Aorta (tissue), 5 donors: ENCODE measurements at regions of chr18 and their contacts with region 1.

Region 1: GRCh38 chr18:8389391-8390340 is 219.6 kb upstream of the RAB12 start:
- DNase-seq: peak; percentile 70 to 84
- ATAC-seq: peak; percentile 65
- H3K4me3 ChIP-seq: no peak overlapping the region
- H3K27ac ChIP-seq: no peak overlapping the region
- H3K4me1 ChIP-seq: no peaks in the 10 kb centered on the region
- H3K27me3 ChIP-seq: no peaks in the 10 kb centered on the region

Region 2: DNA sequence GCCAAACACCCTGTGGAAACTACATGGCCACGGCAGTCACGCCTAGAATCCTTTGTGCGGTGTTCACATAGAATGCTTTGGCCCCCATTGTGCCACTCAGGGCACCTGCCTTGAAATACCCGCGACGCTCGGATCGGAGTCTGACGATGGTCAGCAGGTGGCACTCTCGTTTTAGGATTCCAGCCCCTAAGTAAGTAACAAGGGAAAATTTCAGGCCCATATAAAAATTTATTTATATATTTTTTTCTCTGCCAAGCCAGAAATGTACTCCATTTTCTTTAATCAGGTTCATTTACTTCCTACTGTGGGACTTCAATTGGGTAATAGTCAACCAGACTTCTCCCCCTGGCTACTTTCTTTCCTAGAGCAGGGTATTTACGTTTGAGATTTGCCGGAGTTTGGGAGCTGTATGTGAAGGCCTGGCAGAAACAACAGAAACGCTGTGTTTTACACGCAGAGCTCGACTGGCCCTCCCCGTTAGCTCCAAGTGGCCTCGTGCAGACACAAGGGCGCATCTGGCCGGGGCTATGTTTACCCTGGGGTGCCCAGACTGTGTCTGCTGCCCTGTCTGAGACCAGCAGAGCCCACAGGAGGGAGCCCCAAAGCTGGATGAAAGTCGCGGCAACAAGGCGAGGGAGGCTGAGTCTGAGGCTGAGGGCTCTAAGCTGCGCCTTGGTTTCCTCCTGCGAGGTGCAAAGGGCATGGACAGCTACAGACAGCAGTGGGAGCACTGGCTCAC is 1117.2 kb before region 1 on chr18:
- intact Hi-C with region 1: loop called in 1 of 2 experiments (anchors 5 kb)
- DNase-seq: peak; percentile 78 to 86
- ATAC-seq: peak; percentile 86
- H3K4me3 ChIP-seq: no peak overlapping the region
- H3K27ac ChIP-seq: no peak overlapping the region
- H3K4me1 ChIP-seq: no peaks in the 10 kb centered on the region
- H3K27me3 ChIP-seq: no peaks in the 10 kb centered on the region

Region 3: DNA sequence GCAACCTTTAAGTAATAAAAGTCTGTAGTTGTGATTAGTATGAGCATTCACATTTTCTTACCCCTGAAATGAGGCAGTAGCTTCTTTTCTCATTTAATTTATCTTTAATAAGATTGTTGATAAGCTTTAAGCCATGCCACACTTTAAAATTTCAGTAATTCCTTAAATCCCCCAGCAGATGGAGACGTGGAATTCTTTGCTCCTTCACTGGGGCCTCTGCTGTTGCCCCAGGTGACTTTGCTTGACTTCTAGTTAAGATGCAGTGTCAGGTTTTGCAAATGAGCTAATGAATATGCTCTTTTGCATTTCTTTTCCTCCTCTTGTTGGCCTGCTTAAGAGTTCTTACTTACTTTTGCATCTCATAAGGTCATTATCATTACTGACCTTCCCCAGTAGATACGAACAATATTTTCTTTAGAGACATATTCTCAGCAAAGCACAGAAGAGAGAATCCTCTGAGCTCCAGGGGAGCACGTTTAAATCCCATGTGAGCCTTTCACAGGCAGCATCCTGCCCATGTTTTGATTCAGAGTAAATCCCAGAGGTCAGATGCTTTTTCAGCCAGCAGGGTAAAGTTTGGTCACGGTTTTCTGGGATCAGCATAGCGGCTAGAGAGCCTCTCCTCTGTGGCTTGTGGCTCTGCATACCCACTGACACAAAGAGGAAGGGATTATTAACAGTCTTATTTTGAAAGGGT is 599.7 kb before region 1 on chr18:
- intact Hi-C with region 1: loop called in 1 of 2 experiments (anchors 5 kb)
- DNase-seq: no peak
- ATAC-seq: no peak
- H3K4me3 ChIP-seq: no peak overlapping the region
- H3K27ac ChIP-seq: no peak overlapping the region
- H3K4me1 ChIP-seq: no peaks in the 10 kb centered on the region
- H3K27me3 ChIP-seq: no peaks in the 10 kb centered on the region

Region 4: GRCh38 chr18:7946734-7947377 is 442.8 kb before region 1 on chr18:
- intact Hi-C with region 1: loop called in 1 of 2 experiments (anchors 5 kb)
- DNase-seq: no peak
- ATAC-seq: no peak
- H3K4me3 ChIP-seq: no peak overlapping the region
- H3K27ac ChIP-seq: no peak overlapping the region
- H3K4me1 ChIP-seq: no peaks in the 10 kb centered on the region
- H3K27me3 ChIP-seq: no peaks in the 10 kb centered on the region